ENCODE measurements at regions of chr3 and their contacts with region 1.

Region 1: GRCh38 chr3:160052385-160053047 is 63.9 kb downstream of the IL12A start:
- DNase-seq: no peak
- H3K4me3 Mint-ChIP-seq: peak overlapping the region; percentile 29
- H3K27ac Mint-ChIP-seq: peak overlapping the region; percentile 6
- H3K4me1 Mint-ChIP-seq: peaks cover 12% of the 10 kb centered on the region
- H3K27me3 Mint-ChIP-seq: no peaks in the 10 kb centered on the region
- CTCF ChIP-seq: no peak

Region 2: DNA sequence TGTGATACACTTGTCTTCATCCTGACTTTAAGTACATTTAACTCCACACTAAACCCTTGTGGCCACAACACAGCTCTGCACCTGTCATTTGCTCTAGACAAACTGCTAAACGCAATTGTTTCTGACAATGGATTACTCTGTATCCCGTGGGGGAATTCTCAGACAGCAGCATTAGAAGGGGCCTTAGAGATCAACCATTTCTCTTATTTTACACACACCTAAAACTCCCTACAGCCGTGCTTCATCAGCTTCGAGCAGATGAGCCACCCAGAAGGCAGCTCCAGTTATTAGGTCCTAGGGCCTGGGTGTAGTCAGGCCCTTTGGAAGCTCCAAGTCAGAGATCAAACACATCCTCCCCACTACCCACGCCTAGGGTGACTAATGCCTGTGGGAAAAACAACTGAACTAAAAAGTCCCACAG is 65.2 kb before region 1 on chr3:
- CTCF ChIA-PET with region 1: no interaction called
- POLR2A ChIA-PET with region 1: no interaction called
- intact Hi-C with region 1: no loop called
- DNase-seq: peak; percentile 12
- H3K4me3 Mint-ChIP-seq: no peak overlapping the region
- H3K27ac Mint-ChIP-seq: no peak overlapping the region
- H3K4me1 Mint-ChIP-seq: peaks cover 22% of the 10 kb centered on the region
- H3K27me3 Mint-ChIP-seq: no peaks in the 10 kb centered on the region
- CTCF ChIP-seq: no peak

Region 3: GRCh38 chr3:160016972-160017371 is 35.5 kb before region 1 on chr3:
- CTCF ChIA-PET with region 1: no interaction called
- POLR2A ChIA-PET with region 1: no interaction called
- intact Hi-C with region 1: no loop called
- DNase-seq: peak; percentile 84
- H3K4me3 Mint-ChIP-seq: no peak overlapping the region
- H3K27ac Mint-ChIP-seq: no peak overlapping the region
- H3K4me1 Mint-ChIP-seq: peaks cover 5% of the 10 kb centered on the region
- H3K27me3 Mint-ChIP-seq: peaks cover 22% of the 10 kb centered on the region
- CTCF ChIP-seq: no peak

Region 4: DNA sequence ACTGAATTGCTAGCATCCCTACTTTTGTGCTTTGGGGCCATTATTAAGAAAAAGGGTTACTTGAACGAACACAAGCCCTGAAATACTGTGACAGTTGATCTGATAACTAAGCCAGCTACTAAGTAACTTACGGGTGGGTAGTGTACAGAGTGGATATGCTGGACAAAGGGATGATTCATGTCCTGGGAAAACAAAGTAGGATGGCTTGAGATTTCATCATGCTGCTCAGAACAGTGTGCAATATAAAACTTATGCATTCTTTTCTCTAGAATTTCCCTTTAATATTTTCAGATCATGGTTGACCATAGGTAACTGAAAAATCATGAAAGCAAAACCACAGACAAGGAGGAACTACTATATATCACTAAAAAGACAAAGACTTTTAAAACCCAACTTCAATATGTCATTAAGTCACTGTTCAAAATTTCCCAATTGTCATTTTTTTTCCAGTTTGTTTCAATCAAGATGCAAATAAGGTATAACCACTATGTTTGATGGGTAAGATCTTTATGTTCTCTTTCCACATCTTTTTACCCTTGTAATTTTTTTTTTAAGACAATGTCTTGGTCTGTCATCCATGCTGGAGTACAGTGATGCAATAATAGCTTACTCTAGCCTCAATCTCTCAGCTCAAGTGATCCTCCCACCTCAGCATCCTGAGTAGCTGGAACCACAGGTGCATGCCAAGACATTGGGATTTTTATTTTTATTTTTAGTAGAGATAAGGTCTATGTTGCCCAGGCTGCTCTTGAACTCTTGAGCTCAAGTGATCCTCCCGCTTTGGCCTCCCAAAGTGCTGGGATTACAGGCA is 278.8 kb after region 1 on chr3:
- CTCF ChIA-PET with region 1: no interaction called
- POLR2A ChIA-PET with region 1: interaction called, 11 read pairs
- intact Hi-C with region 1: no loop called
- DNase-seq: peak; percentile 70
- H3K4me3 Mint-ChIP-seq: no peak overlapping the region
- H3K27ac Mint-ChIP-seq: peak overlapping the region; percentile 94
- H3K4me1 Mint-ChIP-seq: peaks cover 25% of the 10 kb centered on the region
- H3K27me3 Mint-ChIP-seq: no peaks in the 10 kb centered on the region
- CTCF ChIP-seq: no peak